CD8-positive, alpha-beta T cell (primary cell): ENCODE measurements at regions of chrX and their contacts with region 1.

Region 1: GRCh38 chrX:136880452-136881013 is at the start of gene RBMX:
- DNase-seq: peak; percentile 78 to 95 (median 90)
- ATAC-seq: peak; percentile 82
- H3K4me3 ChIP-seq: peak within 1 kb of the TSS; percentile 86 to 90
- H3K4me3 Mint-ChIP-seq: peak within 1 kb of the TSS; percentile 97
- H3K27ac ChIP-seq: peak within 1 kb of the TSS; percentile 88 to 93
- H3K27ac Mint-ChIP-seq: peak within 1 kb of the TSS; percentile 98
- H3K4me1 ChIP-seq: peaks cover 16% of the 10 kb centered on the region
- H3K4me1 Mint-ChIP-seq: peaks cover 23% of the 10 kb centered on the region
- H3K27me3 ChIP-seq: no peaks in the 10 kb centered on the region
- H3K27me3 Mint-ChIP-seq: no peaks in the 10 kb centered on the region
- CTCF ChIP-seq: no peak
- total RNA-seq, gene RBMX: 306 to 307 TPM

Region 2: DNA sequence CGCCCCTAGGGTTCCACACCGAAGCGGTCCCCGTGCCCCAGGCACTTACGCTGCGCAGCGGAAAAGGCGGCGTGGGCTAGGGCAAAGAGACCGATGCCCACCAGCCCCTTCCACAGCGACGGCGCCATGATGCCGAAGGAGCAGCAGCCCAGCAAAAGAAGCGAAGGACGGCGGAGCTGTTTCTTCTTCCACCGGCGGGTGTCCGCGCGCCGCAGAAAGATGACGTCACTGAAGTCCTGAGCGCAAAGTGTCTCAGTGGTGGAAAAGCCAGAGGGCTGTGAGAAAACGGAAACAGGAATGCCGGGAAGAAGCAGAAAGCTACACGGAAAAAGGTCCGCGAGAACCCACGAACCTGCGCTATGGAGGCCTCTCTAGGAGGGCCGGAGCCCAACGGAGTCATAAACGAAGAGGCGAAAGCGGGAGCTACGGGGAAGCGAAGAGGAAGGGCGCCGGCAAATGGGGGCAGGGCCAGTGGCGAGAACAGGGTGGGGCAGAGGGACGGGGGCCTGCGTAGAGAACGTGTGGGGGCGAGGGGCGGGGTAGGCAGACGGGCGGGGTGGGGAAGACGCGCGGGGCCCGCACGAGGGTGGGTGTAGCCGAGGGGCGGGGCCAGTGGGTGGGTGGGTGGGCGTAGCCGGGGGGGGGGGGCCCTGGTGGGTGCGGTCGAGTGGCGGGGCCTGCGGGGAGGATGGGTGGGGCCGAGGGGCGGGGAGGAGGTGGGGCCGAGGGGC is 906.8 kb before region 1 on chrX and contains the start of gene MMGT1:
- CTCF ChIA-PET with region 1: no interaction called
- POLR2A ChIA-PET with region 1: no interaction called
- intact Hi-C with region 1: loop called in 1 of 2 experiments (anchors 5 kb)
- DNase-seq: peak; percentile 62 to 92 (median 78)
- ATAC-seq: peak; percentile 87
- H3K4me3 ChIP-seq: peak within 1 kb of the TSS; percentile 91 to 99
- H3K4me3 Mint-ChIP-seq: peak within 1 kb of the TSS; percentile 97
- H3K27ac ChIP-seq: peak within 1 kb of the TSS; percentile 93 to 94
- H3K27ac Mint-ChIP-seq: peak within 1 kb of the TSS; percentile 96
- H3K4me1 ChIP-seq: peaks cover 14% of the 10 kb centered on the region
- H3K4me1 Mint-ChIP-seq: peaks cover 36% of the 10 kb centered on the region
- H3K27me3 ChIP-seq: no peaks in the 10 kb centered on the region
- H3K27me3 Mint-ChIP-seq: no peaks in the 10 kb centered on the region
- CTCF ChIP-seq: no peak
- total RNA-seq, gene MMGT1: 35.0 to 35.6 TPM

Region 3: GRCh38 chrX:136626237-136626636 is 254.3 kb before region 1 on chrX:
- CTCF ChIA-PET with region 1: no interaction called
- POLR2A ChIA-PET with region 1: no interaction called
- intact Hi-C with region 1: no loop called
- DNase-seq: no peak
- ATAC-seq: no peak
- H3K4me3 ChIP-seq: no peak overlapping the region
- H3K4me3 Mint-ChIP-seq: peak overlapping the region; percentile 11
- H3K27ac ChIP-seq: peak overlapping the region in 1 of 2 experiments; percentile 9
- H3K27ac Mint-ChIP-seq: no peak overlapping the region
- H3K4me1 ChIP-seq: peaks cover 83% of the 10 kb centered on the region
- H3K4me1 Mint-ChIP-seq: peaks cover 83% of the 10 kb centered on the region
- H3K27me3 ChIP-seq: no peaks in the 10 kb centered on the region
- H3K27me3 Mint-ChIP-seq: no peaks in the 10 kb centered on the region
- CTCF ChIP-seq: no peak

Region 4: GRCh38 chrX:136767104-136767941 is 113.2 kb before region 1 on chrX:
- CTCF ChIA-PET with region 1: interaction called, 3 read pairs
- POLR2A ChIA-PET with region 1: interaction called, 12 read pairs
- intact Hi-C with region 1: loop called (anchors 5 to 10 kb)
- DNase-seq: peak in 8 of 9 experiments; percentile 16 to 71 (median 56)
- ATAC-seq: peak; percentile 71
- H3K4me3 ChIP-seq: peak overlapping the region; percentile 55 to 58
- H3K4me3 Mint-ChIP-seq: peak overlapping the region; percentile 82
- H3K27ac ChIP-seq: peak overlapping the region; percentile 15 to 25
- H3K27ac Mint-ChIP-seq: peak overlapping the region; percentile 87
- H3K4me1 ChIP-seq: peaks cover 61% of the 10 kb centered on the region
- H3K4me1 Mint-ChIP-seq: peaks cover 68% of the 10 kb centered on the region
- H3K27me3 ChIP-seq: no peaks in the 10 kb centered on the region
- H3K27me3 Mint-ChIP-seq: no peaks in the 10 kb centered on the region
- CTCF ChIP-seq: no peak

Region 5: GRCh38 chrX:136780763-136781162 is 99.8 kb before region 1 on chrX and contains the start of gene ARHGEF6:
- CTCF ChIA-PET with region 1: no interaction called
- POLR2A ChIA-PET with region 1: interaction called, 27 read pairs
- intact Hi-C with region 1: loop called (anchors 2 to 5 kb)
- DNase-seq: peak in 7 of 9 experiments; percentile 0 to 65 (median 36)
- ATAC-seq: peak; percentile 58
- H3K4me3 ChIP-seq: peak within 1 kb of the TSS; percentile 67
- H3K4me3 Mint-ChIP-seq: peak within 1 kb of the TSS; percentile 93
- H3K27ac ChIP-seq: peak within 1 kb of the TSS; percentile 60 to 80
- H3K27ac Mint-ChIP-seq: peak within 1 kb of the TSS; percentile 96
- H3K4me1 ChIP-seq: peaks cover 44% of the 10 kb centered on the region
- H3K4me1 Mint-ChIP-seq: peaks cover 68% of the 10 kb centered on the region
- H3K27me3 ChIP-seq: no peaks in the 10 kb centered on the region
- H3K27me3 Mint-ChIP-seq: no peaks in the 10 kb centered on the region
- CTCF ChIP-seq: no peak
- total RNA-seq, gene ARHGEF6: 32.2 to 33.2 TPM

Region 6: GRCh38 chrX:136909706-136910564 is 29.4 kb after region 1 on chrX:
- CTCF ChIA-PET with region 1: no interaction called
- POLR2A ChIA-PET with region 1: interaction called, 12 read pairs
- intact Hi-C with region 1: loop called (anchors 1 kb)
- DNase-seq: peak; percentile 12 to 82 (median 60)
- ATAC-seq: peak; percentile 65
- H3K4me3 ChIP-seq: peak overlapping the region; percentile 46 to 73
- H3K4me3 Mint-ChIP-seq: peak overlapping the region; percentile 92
- H3K27ac ChIP-seq: peak overlapping the region; percentile 33 to 80
- H3K27ac Mint-ChIP-seq: peak overlapping the region; percentile 85
- H3K4me1 ChIP-seq: no peaks in the 10 kb centered on the region
- H3K4me1 Mint-ChIP-seq: peaks cover 20% of the 10 kb centered on the region
- H3K27me3 ChIP-seq: no peaks in the 10 kb centered on the region
- H3K27me3 Mint-ChIP-seq: no peaks in the 10 kb centered on the region
- CTCF ChIP-seq: no peak

Region 7: GRCh38 chrX:136920001-136920400 is 39.5 kb after region 1 on chrX:
- CTCF ChIA-PET with region 1: interaction called, 6 read pairs
- POLR2A ChIA-PET with region 1: interaction called, 4 read pairs
- intact Hi-C with region 1: loop called (anchors 5 kb)
- DNase-seq: no peak
- ATAC-seq: no peak
- H3K4me3 ChIP-seq: no peak overlapping the region
- H3K4me3 Mint-ChIP-seq: no peak overlapping the region
- H3K27ac ChIP-seq: no peak overlapping the region
- H3K27ac Mint-ChIP-seq: no peak overlapping the region
- H3K4me1 ChIP-seq: no peaks in the 10 kb centered on the region
- H3K4me1 Mint-ChIP-seq: peaks cover 2% of the 10 kb centered on the region
- H3K27me3 ChIP-seq: no peaks in the 10 kb centered on the region
- H3K27me3 Mint-ChIP-seq: no peaks in the 10 kb centered on the region
- CTCF ChIP-seq: no peak